Endothelial cell of umbilical vein (primary cell): ENCODE measurements at regions of chr2 and their contacts with region 1.

Region 1: DNA sequence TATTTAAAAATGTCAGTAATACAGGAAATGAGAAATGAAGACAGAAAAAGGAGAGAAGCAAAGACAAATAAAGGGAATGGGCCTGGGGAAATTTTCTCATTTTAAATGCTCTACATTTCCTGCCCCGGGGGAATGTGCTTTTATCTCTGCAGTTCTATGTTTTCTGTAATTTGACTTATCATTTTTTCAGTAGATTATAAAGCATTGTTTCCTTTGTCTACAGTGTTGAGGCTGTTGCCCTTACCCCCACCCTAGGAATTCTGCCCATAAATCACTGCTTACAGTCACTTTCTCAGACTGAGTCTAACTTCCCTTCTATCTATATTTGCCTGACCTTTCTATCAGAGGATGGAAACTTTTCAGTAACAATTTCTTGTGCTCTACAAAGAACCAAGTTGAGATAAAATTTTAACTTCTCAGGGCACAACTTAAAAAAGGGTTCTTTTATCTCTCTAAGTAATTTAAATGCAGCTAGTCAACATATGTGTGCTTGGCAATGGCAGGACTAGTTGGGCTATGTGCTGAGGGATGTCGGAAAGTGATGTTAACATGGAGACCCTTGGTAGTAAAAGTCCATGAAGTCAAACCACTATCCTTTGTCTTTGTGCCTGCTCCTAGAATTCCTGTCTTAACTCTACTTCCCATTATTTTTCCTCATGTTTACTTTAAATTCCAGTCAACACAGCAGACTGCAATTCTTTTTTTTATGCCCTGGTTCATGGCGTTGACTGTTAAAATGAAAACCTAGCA is 146.5 kb upstream of the MMADHC start:
- DNase-seq: peak; percentile 94
- H3K4me3 ChIP-seq: no peak overlapping the region
- H3K27ac ChIP-seq: peak overlapping the region; percentile 97
- H3K4me1 ChIP-seq: peaks cover 39% of the 10 kb centered on the region
- H3K27me3 ChIP-seq: no peaks in the 10 kb centered on the region
- CTCF ChIP-seq: no peak
- POLR2A ChIP-seq: no peak

Region 2: GRCh38 chr2:149679286-149679685 is 54.8 kb before region 1 on chr2:
- CTCF ChIA-PET with region 1: no interaction called
- POLR2A ChIA-PET with region 1: no interaction called
- dilution Hi-C with region 1: no loop called
- intact Hi-C with region 1: no loop called
- DNase-seq: no peak
- H3K4me3 ChIP-seq: no peak overlapping the region
- H3K27ac ChIP-seq: no peak overlapping the region
- H3K4me1 ChIP-seq: no peaks in the 10 kb centered on the region
- H3K27me3 ChIP-seq: no peaks in the 10 kb centered on the region
- CTCF ChIP-seq: no peak
- POLR2A ChIP-seq: no peak

Region 3: GRCh38 chr2:149767516-149767974 is 33.4 kb after region 1 on chr2:
- CTCF ChIA-PET with region 1: interaction called, 5 read pairs
- POLR2A ChIA-PET with region 1: interaction called, 3 read pairs
- dilution Hi-C with region 1: no loop called
- intact Hi-C with region 1: loop called (anchors 1 kb)
- DNase-seq: peak; percentile 67
- H3K4me3 ChIP-seq: no peak overlapping the region
- H3K27ac ChIP-seq: peak overlapping the region; percentile 70
- H3K4me1 ChIP-seq: peaks cover 34% of the 10 kb centered on the region
- H3K27me3 ChIP-seq: no peaks in the 10 kb centered on the region
- CTCF ChIP-seq: no peak
- POLR2A ChIP-seq: no peak

Region 4: DNA sequence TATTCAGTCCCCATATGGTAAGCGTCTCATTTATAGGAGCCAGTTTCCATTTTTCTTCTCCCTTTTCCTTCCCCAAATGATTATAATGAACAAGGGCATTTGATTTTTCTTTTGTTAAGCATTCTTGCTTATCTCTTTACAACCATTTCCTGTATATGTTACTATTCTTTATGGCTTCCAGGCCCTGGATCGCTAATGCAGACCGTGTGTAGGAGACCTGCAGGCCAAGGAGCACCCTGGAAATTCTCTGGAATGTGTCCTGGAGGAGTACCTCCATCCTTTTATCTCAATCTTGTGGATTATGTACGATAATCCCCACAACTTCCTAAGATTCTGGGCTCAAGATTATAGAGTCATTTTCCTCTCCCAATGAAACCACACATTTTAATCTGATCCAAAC is 293.1 kb after region 1 on chr2:
- CTCF ChIA-PET with region 1: no interaction called
- POLR2A ChIA-PET with region 1: no interaction called
- dilution Hi-C with region 1: no loop called
- intact Hi-C with region 1: loop called (anchors 5 kb)
- DNase-seq: peak; percentile 82
- H3K4me3 ChIP-seq: no peak overlapping the region
- H3K27ac ChIP-seq: peak overlapping the region; percentile 28
- H3K4me1 ChIP-seq: peaks cover 21% of the 10 kb centered on the region
- H3K27me3 ChIP-seq: no peaks in the 10 kb centered on the region
- CTCF ChIP-seq: no peak
- POLR2A ChIP-seq: no peak

Region 5: DNA sequence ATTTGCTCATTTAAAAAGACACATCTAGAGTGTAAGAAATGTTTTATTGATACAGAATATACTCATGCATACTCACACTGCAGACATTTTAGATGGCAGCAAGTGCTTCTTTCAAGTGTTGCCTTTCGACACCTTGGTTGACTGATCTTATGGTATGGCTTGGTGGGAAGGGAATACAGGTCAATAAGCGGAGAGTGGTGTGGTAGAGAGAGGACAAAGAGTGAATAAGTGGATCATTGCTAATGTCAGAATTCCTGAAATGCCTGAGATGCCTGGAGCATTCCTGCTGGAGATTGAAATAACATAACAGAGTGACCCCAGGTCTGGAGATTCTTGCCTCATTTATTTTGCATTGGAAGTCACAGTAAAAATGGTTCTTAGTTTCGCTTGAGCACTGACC is 676.7 kb after region 1 on chr2:
- CTCF ChIA-PET with region 1: no interaction called
- POLR2A ChIA-PET with region 1: no interaction called
- dilution Hi-C with region 1: no loop called
- intact Hi-C with region 1: loop called (anchors 1 kb)
- DNase-seq: peak; percentile 85
- H3K4me3 ChIP-seq: no peak overlapping the region
- H3K27ac ChIP-seq: peak overlapping the region; percentile 95
- H3K4me1 ChIP-seq: peaks cover 40% of the 10 kb centered on the region
- H3K27me3 ChIP-seq: no peaks in the 10 kb centered on the region
- CTCF ChIP-seq: no peak
- POLR2A ChIP-seq: peak; percentile 39